HCT116 (cell line): ENCODE measurements at regions of chr12 and their contacts with region 1.

Region 1: GRCh38 chr12:56333679-56334489 is at the start of gene PAN2:
- DNase-seq: peak; percentile 98
- ATAC-seq: peak; percentile 97
- H3K4me3 ChIP-seq: peak within 1 kb of the TSS; percentile 68 to 87
- H3K27ac ChIP-seq: peak within 1 kb of the TSS; percentile 66
- H3K4me1 ChIP-seq: peaks cover 11 to 24% of the 10 kb centered on the region in 2 experiments
- H3K27me3 ChIP-seq: no peaks in the 10 kb centered on the region
- CTCF ChIP-seq: peak; percentile 13 to 68 (median 54); a peak in 4 of 6 replicates
- POLR2A ChIP-seq: peak; percentile 82
- RAD21 ChIP-seq: peak; percentile 34; the same call in 1 of the 2 replicates
- total RNA-seq, gene PAN2: 75.0 TPM

Region 2: DNA sequence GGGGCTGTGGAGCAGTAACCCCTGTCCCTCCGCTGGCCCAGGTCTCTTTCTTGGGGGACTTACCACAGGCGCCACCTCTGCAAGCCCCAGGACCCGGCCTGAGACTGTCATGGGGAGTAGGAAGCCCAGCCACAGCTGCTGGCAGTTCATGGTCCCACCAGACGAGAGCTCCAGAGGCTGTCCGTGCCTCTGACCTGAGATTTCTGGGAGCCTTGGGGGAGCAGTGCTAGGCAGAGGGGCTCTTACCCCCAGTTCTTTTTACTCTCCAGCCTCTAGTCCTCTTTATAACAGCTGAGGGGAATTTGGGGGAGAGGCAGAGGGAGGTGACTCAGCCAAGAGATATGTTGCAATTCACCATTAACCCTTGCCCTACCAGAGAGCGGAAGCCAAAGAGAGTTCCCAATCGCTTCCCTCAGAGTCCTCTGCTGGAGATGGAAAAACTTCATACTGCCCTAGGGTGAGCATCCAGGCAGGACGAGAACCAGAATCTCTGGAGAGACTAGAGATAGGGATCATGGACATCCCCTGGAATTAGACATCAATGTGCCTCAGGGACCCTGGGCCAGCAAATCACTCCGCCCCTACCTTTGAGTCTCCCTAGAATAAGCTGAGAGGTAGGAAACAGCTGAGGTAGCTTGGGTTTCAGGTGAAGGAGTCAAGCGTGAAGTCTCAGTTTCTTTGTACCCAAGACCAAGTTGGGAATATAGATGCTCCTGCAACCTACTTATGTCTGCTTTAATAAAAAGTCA is 491.0 kb before region 1 on chr12 and contains the start of gene MMP19:
- CTCF ChIA-PET with region 1: no interaction called
- POLR2A ChIA-PET with region 1: no interaction called
- RAD21 ChIA-PET with region 1: no interaction called
- intact Hi-C with region 1: no loop called
- DNase-seq: no peak
- ATAC-seq: peak; percentile 76
- H3K4me3 ChIP-seq: peak within 1 kb of the TSS; percentile 22 to 46
- H3K27ac ChIP-seq: no peak within 1 kb of the TSS
- H3K4me1 ChIP-seq: peaks cover 11 to 31% of the 10 kb centered on the region in 2 experiments
- H3K27me3 ChIP-seq: no peaks in the 10 kb centered on the region
- CTCF ChIP-seq: no peak
- POLR2A ChIP-seq: no peak
- RAD21 ChIP-seq: no peak
- total RNA-seq, gene MMP19: 2.3 TPM

Region 3: GRCh38 chr12:55996715-55997534 is 337.0 kb before region 1 on chr12 and contains the start of gene SUOX:
- CTCF ChIA-PET with region 1: no interaction called
- POLR2A ChIA-PET with region 1: no interaction called
- RAD21 ChIA-PET with region 1: no interaction called
- intact Hi-C with region 1: no loop called
- DNase-seq: peak; percentile 93
- ATAC-seq: peak; percentile 99
- H3K4me3 ChIP-seq: peak within 1 kb of the TSS; percentile 62 to 76
- H3K27ac ChIP-seq: peak within 1 kb of the TSS; percentile 63
- H3K4me1 ChIP-seq: peaks cover 8 to 15% of the 10 kb centered on the region in 2 experiments; a peak in 3 of 4 replicates
- H3K27me3 ChIP-seq: no peaks in the 10 kb centered on the region
- CTCF ChIP-seq: no peak
- POLR2A ChIP-seq: peak; percentile 55
- RAD21 ChIP-seq: no peak
- total RNA-seq, gene SUOX: 18.0 TPM

Region 4: DNA sequence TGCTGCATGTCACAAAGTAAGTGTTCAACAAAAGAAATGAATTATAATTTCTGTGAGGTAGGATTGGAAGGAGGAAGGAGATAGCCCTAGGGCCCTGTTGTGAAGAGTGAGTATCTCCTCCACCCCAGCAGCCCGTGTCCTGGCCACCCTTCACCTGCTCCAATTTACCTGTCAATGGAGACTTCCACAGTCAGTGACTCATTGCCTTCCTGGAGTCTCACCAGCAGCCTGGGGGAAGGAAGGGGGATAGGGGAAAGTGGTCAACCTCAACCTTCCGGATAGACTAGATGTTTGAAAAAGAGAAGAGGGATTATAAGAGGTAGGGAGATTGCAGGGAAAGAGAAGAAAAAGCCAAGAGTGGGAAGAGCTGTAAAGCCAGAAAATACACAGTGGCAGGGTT is 16.8 kb after region 1 on chr12:
- CTCF ChIA-PET with region 1: interaction called, 4 read pairs
- POLR2A ChIA-PET with region 1: no interaction called
- RAD21 ChIA-PET with region 1: no interaction called
- intact Hi-C with region 1: loop called (anchors 1 kb)
- DNase-seq: no peak
- ATAC-seq: no peak
- H3K4me3 ChIP-seq: no peak overlapping the region
- H3K27ac ChIP-seq: no peak overlapping the region
- H3K4me1 ChIP-seq: no peaks in the 10 kb centered on the region
- H3K27me3 ChIP-seq: no peaks in the 10 kb centered on the region
- CTCF ChIP-seq: no peak
- POLR2A ChIP-seq: no peak
- RAD21 ChIP-seq: no peak

Region 5: DNA sequence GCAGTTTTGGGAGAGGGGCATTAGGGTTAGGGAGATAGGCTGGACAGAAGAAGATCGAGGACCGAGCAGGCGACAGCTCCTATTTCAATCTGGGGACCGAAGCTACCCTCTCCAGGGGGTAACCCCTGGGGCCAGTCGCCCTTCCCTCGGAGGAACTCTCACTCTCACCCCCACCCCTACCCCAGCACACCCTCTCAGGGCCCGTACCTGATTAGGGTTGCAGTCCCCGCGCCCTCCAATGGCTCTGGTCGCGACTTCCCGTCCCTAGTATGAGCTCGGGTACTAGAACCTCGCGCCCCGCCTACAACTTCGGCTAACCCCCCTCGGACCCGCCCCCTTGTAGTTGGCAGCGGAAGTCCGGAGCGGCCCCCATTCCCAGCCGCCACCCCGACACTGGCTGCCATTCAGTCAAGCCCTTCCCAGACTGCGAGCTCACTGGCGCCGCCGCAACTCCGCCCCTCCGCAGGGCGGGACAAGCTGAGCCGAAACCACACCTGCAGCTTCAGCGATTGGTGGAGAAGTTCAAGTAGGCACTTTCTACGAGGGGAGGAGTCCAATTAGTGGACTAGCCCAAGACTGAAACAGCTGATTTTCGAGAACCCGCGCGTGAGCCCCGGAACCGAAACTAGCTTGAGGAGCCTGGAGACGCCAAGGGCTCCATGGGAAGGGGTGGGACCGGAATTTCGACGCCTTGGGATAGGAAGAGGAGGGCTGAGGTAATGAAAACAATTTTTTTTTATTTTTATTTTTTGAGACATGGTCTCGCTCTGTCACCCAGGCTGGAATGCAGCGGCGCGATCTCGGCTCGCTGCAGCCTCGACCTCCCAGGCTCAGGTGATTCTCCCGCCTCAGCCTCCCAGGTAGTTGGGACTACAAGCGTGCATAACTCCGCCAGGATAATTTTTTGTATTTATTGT is 26.2 kb after region 1 on chr12 and contains the start of gene STAT2:
- CTCF ChIA-PET with region 1: interaction called, 5 read pairs
- POLR2A ChIA-PET with region 1: interaction called, 20 read pairs
- RAD21 ChIA-PET with region 1: no interaction called
- intact Hi-C with region 1: loop called (anchors 2 kb)
- DNase-seq: peak; percentile 100
- ATAC-seq: peak; percentile 96
- H3K4me3 ChIP-seq: peak within 1 kb of the TSS; percentile 74 to 93
- H3K27ac ChIP-seq: peak within 1 kb of the TSS; percentile 74
- H3K4me1 ChIP-seq: peaks cover 10 to 18% of the 10 kb centered on the region in 2 experiments; a peak in 3 of 4 replicates
- H3K27me3 ChIP-seq: no peaks in the 10 kb centered on the region
- CTCF ChIP-seq: no peak
- POLR2A ChIP-seq: peak; percentile 50
- RAD21 ChIP-seq: no peak
- total RNA-seq, gene STAT2: 53.1 TPM

Region 6: GRCh38 chr12:56461235-56462159 is 127.6 kb after region 1 on chr12:
- CTCF ChIA-PET with region 1: no interaction called
- POLR2A ChIA-PET with region 1: interaction called, 3 read pairs
- RAD21 ChIA-PET with region 1: no interaction called
- intact Hi-C with region 1: loop called (anchors 5 kb)
- DNase-seq: no peak
- ATAC-seq: peak; percentile 30; the same call in 1 of the 2 replicates
- H3K4me3 ChIP-seq: no peak overlapping the region; a peak in 1 of 4 replicates
- H3K27ac ChIP-seq: no peak overlapping the region
- H3K4me1 ChIP-seq: peaks cover 5 to 23% of the 10 kb centered on the region in 2 experiments
- H3K27me3 ChIP-seq: no peaks in the 10 kb centered on the region
- CTCF ChIP-seq: no peak
- POLR2A ChIP-seq: no peak
- RAD21 ChIP-seq: no peak